ENCODE measurements at regions of chr12 and their contacts with region 1.

Region 1: GRCh38 chr12:29299633-29300032 is 81.3 kb downstream of the ERGIC2 start:
- DNase-seq: no peak
- H3K4me3 ChIP-seq: no peak overlapping the region
- CTCF ChIP-seq: no peak
- POLR2A ChIP-seq: no peak

Region 2: GRCh38 chr12:28925719-28926376 is 373.8 kb before region 1 on chr12:
- intact Hi-C with region 1: no loop called
- DNase-seq: peak in 1 of 2 donors; percentile 82
- H3K4me3 ChIP-seq: no peak overlapping the region
- CTCF ChIP-seq: no peak
- POLR2A ChIP-seq: no peak

Region 3: GRCh38 chr12:29012673-29013072 is 287.0 kb before region 1 on chr12:
- intact Hi-C with region 1: no loop called
- DNase-seq: no peak
- H3K4me3 ChIP-seq: no peak overlapping the region
- CTCF ChIP-seq: no peak
- POLR2A ChIP-seq: no peak

Region 4: GRCh38 chr12:29241821-29242591 is 57.6 kb before region 1 on chr12:
- intact Hi-C with region 1: no loop called
- DNase-seq: peak in 1 of 2 donors; percentile 68
- H3K4me3 ChIP-seq: no peak overlapping the region
- CTCF ChIP-seq: no peak
- POLR2A ChIP-seq: no peak

Region 5: GRCh38 chr12:29253906-29254625 is 45.6 kb before region 1 on chr12:
- intact Hi-C with region 1: loop called (anchors 1 kb)
- DNase-seq: no peak
- H3K4me3 ChIP-seq: no peak overlapping the region
- CTCF ChIP-seq: no peak
- POLR2A ChIP-seq: no peak

Region 6: DNA sequence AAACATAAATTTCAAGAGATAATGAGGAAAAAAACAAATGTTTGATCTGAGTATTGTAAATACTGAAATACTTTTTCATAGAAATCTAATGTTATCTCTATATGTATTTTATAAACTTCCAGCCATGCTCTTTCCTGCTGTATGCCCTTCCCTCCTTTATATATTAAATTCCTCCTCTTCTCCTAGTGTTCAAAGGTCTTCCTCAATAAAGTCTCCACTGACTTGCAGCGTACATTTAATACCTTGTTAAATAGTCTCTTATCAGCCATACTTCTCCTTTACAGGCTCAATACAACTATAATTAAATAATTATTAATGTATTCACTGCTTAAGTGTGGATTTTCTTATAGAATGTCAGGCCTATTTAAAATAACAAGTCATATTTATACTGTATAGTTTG is 55.3 kb after region 1 on chr12:
- intact Hi-C with region 1: no loop called
- DNase-seq: no peak
- H3K4me3 ChIP-seq: no peak overlapping the region
- CTCF ChIP-seq: no peak
- POLR2A ChIP-seq: no peak

Measured in lower leg skin (tissue), 4 donors.